Endothelial cell of umbilical vein (primary cell): ENCODE measurements at regions of chr6 and their contacts with region 1.

Region 1: DNA sequence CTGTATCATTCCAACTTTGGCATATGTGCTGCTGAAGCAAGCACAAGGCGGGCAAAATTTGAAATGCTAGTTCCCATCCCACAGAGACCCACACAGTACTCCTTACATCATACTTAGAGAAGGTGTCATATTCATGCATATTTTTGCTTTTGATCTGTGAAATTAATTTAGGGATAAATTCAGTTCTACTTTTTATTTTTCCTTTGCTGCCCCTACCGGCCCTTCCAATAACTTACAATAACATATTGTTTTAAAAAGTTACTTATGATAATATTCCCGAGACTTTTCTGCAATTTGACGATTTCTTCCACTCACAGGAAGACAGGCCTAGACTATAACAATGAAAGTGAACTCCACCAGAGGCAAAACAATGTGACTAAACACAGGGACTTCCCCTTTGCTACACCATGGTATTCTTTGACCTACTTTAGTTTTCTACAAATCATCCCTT is 35.0 kb downstream of the SESN1 start:
- DNase-seq: peak; percentile 95
- H3K4me3 ChIP-seq: no peak overlapping the region
- H3K27ac ChIP-seq: peak overlapping the region; percentile 78
- H3K4me1 ChIP-seq: peaks cover 25% of the 10 kb centered on the region
- H3K27me3 ChIP-seq: no peaks in the 10 kb centered on the region
- CTCF ChIP-seq: peak; percentile 10 to 21
- POLR2A ChIP-seq: no peak

Region 2: DNA sequence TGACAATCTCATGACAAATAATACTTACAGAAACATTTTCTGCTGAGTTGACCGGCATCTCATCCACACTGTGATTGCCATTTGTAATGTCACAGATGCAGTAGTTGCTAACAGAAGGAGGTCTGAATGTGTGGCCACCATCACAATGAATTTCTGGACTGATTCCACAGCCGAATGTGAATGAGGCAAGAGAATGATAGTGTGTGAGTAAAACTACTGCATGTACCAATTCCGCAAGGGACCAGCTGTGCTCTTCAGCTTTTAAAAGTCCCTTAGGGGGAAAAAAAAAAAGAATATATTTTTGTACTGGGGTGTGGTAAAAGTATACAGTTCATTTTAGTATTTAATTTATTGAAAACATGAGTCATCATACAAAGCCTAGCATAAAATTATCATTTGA is 61.1 kb before region 1 on chr6:
- CTCF ChIA-PET with region 1: no interaction called
- POLR2A ChIA-PET with region 1: no interaction called
- dilution Hi-C with region 1: no loop called
- intact Hi-C with region 1: no loop called
- DNase-seq: no peak
- H3K4me3 ChIP-seq: no peak overlapping the region
- H3K27ac ChIP-seq: no peak overlapping the region
- H3K4me1 ChIP-seq: no peaks in the 10 kb centered on the region
- H3K27me3 ChIP-seq: no peaks in the 10 kb centered on the region
- CTCF ChIP-seq: no peak
- POLR2A ChIP-seq: no peak

Region 3: GRCh38 chr6:109009236-109009961 is 50.2 kb before region 1 on chr6:
- CTCF ChIA-PET with region 1: interaction called, 3 read pairs
- POLR2A ChIA-PET with region 1: no interaction called
- dilution Hi-C with region 1: no loop called
- intact Hi-C with region 1: loop called (anchors 1 kb)
- DNase-seq: peak; percentile 86
- H3K4me3 ChIP-seq: peak overlapping the region; percentile 63 to 95 (median 92)
- H3K27ac ChIP-seq: peak overlapping the region; percentile 41
- H3K4me1 ChIP-seq: peaks cover 6% of the 10 kb centered on the region
- H3K27me3 ChIP-seq: no peaks in the 10 kb centered on the region
- CTCF ChIP-seq: no peak
- POLR2A ChIP-seq: peak; percentile 75

Region 4: DNA sequence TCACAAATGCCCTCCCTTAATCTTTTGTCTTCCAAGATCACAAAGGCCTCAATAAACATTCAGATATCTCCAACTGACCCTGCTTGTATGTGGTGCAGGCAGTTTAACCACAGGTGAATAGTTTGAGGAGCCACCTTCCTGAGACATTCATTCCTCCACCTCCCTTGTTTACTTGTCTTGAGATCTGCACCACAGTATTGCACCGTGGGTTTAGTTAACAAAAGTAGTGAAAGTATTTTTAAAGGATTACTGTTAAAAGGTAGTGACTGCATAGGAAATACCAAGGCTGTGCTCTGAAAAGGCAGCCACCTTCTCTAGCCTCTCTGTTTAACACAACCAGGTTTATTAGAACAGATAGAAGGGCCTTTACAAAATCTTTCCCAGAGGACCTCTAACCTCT is 11.4 kb before region 1 on chr6:
- CTCF ChIA-PET with region 1: interaction called, 11 read pairs
- POLR2A ChIA-PET with region 1: no interaction called
- dilution Hi-C with region 1: no loop called
- intact Hi-C with region 1: no loop called
- DNase-seq: no peak
- H3K4me3 ChIP-seq: no peak overlapping the region
- H3K27ac ChIP-seq: no peak overlapping the region
- H3K4me1 ChIP-seq: no peaks in the 10 kb centered on the region
- H3K27me3 ChIP-seq: no peaks in the 10 kb centered on the region
- CTCF ChIP-seq: no peak
- POLR2A ChIP-seq: no peak

Region 5: GRCh38 chr6:109073344-109074132 is 13.9 kb after region 1 on chr6:
- CTCF ChIA-PET with region 1: interaction called, 10 read pairs
- POLR2A ChIA-PET with region 1: no interaction called
- dilution Hi-C with region 1: no loop called
- intact Hi-C with region 1: no loop called
- DNase-seq: peak; percentile 77
- H3K4me3 ChIP-seq: no peak overlapping the region
- H3K27ac ChIP-seq: no peak overlapping the region
- H3K4me1 ChIP-seq: peaks cover 5% of the 10 kb centered on the region
- H3K27me3 ChIP-seq: no peaks in the 10 kb centered on the region
- CTCF ChIP-seq: peak; percentile 32 to 55
- POLR2A ChIP-seq: no peak